ENCODE measurements at regions of chr5 and their contacts with region 1.

Region 1: GRCh38 chr5:31819926-31820516 is 181.1 kb downstream of the PDZD2 start:
- DNase-seq: peak in 1 of 2 experiments; percentile 23
- ATAC-seq: peak in 1 of 2 experiments; percentile 56; a peak in 3 of 6 replicates
- H3K4me3 ChIP-seq: no peak overlapping the region
- H3K27ac ChIP-seq: no peak overlapping the region
- H3K4me1 ChIP-seq: no peaks in the 10 kb centered on the region
- CTCF ChIP-seq: no peak
- EP300 ChIP-seq: no peak
- POLR2A ChIP-seq: no peak
- RAD21 ChIP-seq: no peak

Region 2: GRCh38 chr5:31556461-31556860 is 263.6 kb before region 1 on chr5:
- CTCF ChIA-PET with region 1: no interaction called
- POLR2A ChIA-PET with region 1: no interaction called
- DNase-seq: no peak
- ATAC-seq: no peak
- H3K4me3 ChIP-seq: no peak overlapping the region
- H3K27ac ChIP-seq: no peak overlapping the region
- H3K4me1 ChIP-seq: no peaks in the 10 kb centered on the region
- CTCF ChIP-seq: no peak
- EP300 ChIP-seq: no peak
- POLR2A ChIP-seq: no peak
- RAD21 ChIP-seq: no peak

Region 3: GRCh38 chr5:32092938-32093812 is 273.2 kb after region 1 on chr5:
- CTCF ChIA-PET with region 1: interaction called, 53 read pairs
- POLR2A ChIA-PET with region 1: no interaction called
- DNase-seq: peak; percentile 77 to 78
- ATAC-seq: peak; percentile 96
- H3K4me3 ChIP-seq: no peak overlapping the region
- H3K27ac ChIP-seq: no peak overlapping the region
- H3K4me1 ChIP-seq: 0 out of 3 replicates have a peak, but pooled peaks cover 3% of the 10 kb centered on the region
- CTCF ChIP-seq: peak; percentile 88
- EP300 ChIP-seq: no peak
- POLR2A ChIP-seq: no peak
- RAD21 ChIP-seq: peak; percentile 90 to 94